ENCODE measurements at regions of chr2 and their contacts with region 1.

Region 1: DNA sequence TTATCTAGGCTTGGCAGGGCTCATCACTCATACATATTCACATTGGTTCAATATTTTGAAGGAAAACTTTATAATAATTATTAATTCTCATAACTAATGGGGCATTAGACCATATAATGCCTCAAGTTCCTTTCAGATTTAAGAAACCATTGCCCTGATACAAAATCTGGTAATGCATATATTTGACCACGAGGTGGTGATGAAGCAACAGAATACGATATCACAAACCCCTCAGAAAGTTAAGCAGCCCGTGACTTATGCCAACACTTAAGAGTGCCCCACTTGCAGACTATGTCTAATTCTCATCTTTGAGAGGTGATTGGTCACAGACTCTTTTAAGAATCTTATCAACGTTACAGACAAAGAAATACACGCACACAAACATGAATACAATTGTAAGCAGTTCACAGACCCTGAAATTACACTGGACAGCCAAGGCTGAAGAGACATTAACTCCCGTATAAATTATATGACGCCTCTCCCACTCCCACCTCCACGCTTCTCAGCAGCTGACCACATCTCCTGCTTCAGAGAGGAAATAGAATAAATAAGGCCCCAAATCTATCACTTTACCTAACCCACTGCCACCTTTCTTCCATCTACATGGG is 20.7 kb upstream of the DNAH6 start:
- DNase-seq: no peak
- H3K4me3 ChIP-seq: no peak overlapping the region
- CTCF ChIP-seq: no peak
- POLR2A ChIP-seq: no peak

Region 2: GRCh38 chr2:84613082-84613481 is 117.4 kb after region 1 on chr2:
- intact Hi-C with region 1: no loop called
- DNase-seq: no peak
- H3K4me3 ChIP-seq: no peak overlapping the region
- CTCF ChIP-seq: no peak
- POLR2A ChIP-seq: no peak

Region 3: GRCh38 chr2:84881581-84882414 is 386.2 kb after region 1 on chr2:
- intact Hi-C with region 1: loop called (anchors 10 kb)
- DNase-seq: peak; percentile 83 to 96
- H3K4me3 ChIP-seq: peak overlapping the region; percentile 32
- CTCF ChIP-seq: no peak
- POLR2A ChIP-seq: no peak

Region 4: GRCh38 chr2:85215448-85216401 is 720.1 kb after region 1 on chr2:
- intact Hi-C with region 1: loop called (anchors 5 kb)
- DNase-seq: peak in 1 of 2 donors; percentile 86
- H3K4me3 ChIP-seq: no peak overlapping the region
- CTCF ChIP-seq: no peak
- POLR2A ChIP-seq: no peak